ENCODE measurements at regions of chr15 and their contacts with region 1.

Region 1: GRCh38 chr15:60916679-60917460 is 312.2 kb downstream of the RORA start:
- DNase-seq: peak; percentile 76 to 96 (median 84)
- ATAC-seq: peak; percentile 98
- H3K4me3 ChIP-seq: no peak overlapping the region
- H3K4me3 Mint-ChIP-seq: no peak overlapping the region
- H3K27ac ChIP-seq: no peak overlapping the region
- H3K27ac Mint-ChIP-seq: peak overlapping the region; percentile 50
- H3K4me1 ChIP-seq: peaks cover 12% of the 10 kb centered on the region
- H3K4me1 Mint-ChIP-seq: peaks cover 17% of the 10 kb centered on the region
- H3K27me3 ChIP-seq: no peaks in the 10 kb centered on the region
- H3K27me3 Mint-ChIP-seq: no peaks in the 10 kb centered on the region
- CTCF ChIP-seq: peak; percentile 84

Region 2: GRCh38 chr15:60362321-60363086 is 554.4 kb before region 1 on chr15:
- CTCF ChIA-PET with region 1: interaction called, 4 read pairs
- POLR2A ChIA-PET with region 1: interaction called, 3 read pairs
- intact Hi-C with region 1: loop called (anchors 2 to 5 kb)
- DNase-seq: peak in 5 of 14 experiments; percentile 6 to 50 (median 25)
- ATAC-seq: peak; percentile 75
- H3K4me3 ChIP-seq: no peak overlapping the region
- H3K4me3 Mint-ChIP-seq: no peak overlapping the region
- H3K27ac ChIP-seq: no peak overlapping the region
- H3K27ac Mint-ChIP-seq: peak overlapping the region; percentile 62
- H3K4me1 ChIP-seq: peaks cover 15% of the 10 kb centered on the region
- H3K4me1 Mint-ChIP-seq: peaks cover 19% of the 10 kb centered on the region
- H3K27me3 ChIP-seq: no peaks in the 10 kb centered on the region
- H3K27me3 Mint-ChIP-seq: no peaks in the 10 kb centered on the region
- CTCF ChIP-seq: no peak

Region 3: GRCh38 chr15:60520825-60521368 is 396.0 kb before region 1 on chr15:
- CTCF ChIA-PET with region 1: interaction called, 11 read pairs
- POLR2A ChIA-PET with region 1: no interaction called
- intact Hi-C with region 1: loop called in 1 of 2 experiments (anchors 5 kb)
- DNase-seq: peak; percentile 68 to 89 (median 78)
- ATAC-seq: peak; percentile 88
- H3K4me3 ChIP-seq: no peak overlapping the region
- H3K4me3 Mint-ChIP-seq: no peak overlapping the region
- H3K27ac ChIP-seq: no peak overlapping the region
- H3K27ac Mint-ChIP-seq: peak overlapping the region; percentile 65
- H3K4me1 ChIP-seq: peaks cover 22% of the 10 kb centered on the region
- H3K4me1 Mint-ChIP-seq: peaks cover 66% of the 10 kb centered on the region
- H3K27me3 ChIP-seq: no peaks in the 10 kb centered on the region
- H3K27me3 Mint-ChIP-seq: no peaks in the 10 kb centered on the region
- CTCF ChIP-seq: peak; percentile 92

Region 4: GRCh38 chr15:60673918-60674558 is 242.8 kb before region 1 on chr15:
- CTCF ChIA-PET with region 1: interaction called, 11 read pairs
- POLR2A ChIA-PET with region 1: no interaction called
- intact Hi-C with region 1: loop called in 1 of 2 experiments (anchors 5 kb)
- DNase-seq: peak in 3 of 14 experiments; percentile 13 to 55 (median 30)
- ATAC-seq: no peak
- H3K4me3 ChIP-seq: no peak overlapping the region
- H3K4me3 Mint-ChIP-seq: no peak overlapping the region
- H3K27ac ChIP-seq: no peak overlapping the region
- H3K27ac Mint-ChIP-seq: no peak overlapping the region
- H3K4me1 ChIP-seq: no peaks in the 10 kb centered on the region
- H3K4me1 Mint-ChIP-seq: peaks cover 20% of the 10 kb centered on the region
- H3K27me3 ChIP-seq: no peaks in the 10 kb centered on the region
- H3K27me3 Mint-ChIP-seq: no peaks in the 10 kb centered on the region
- CTCF ChIP-seq: no peak